H1 (cell line): ENCODE measurements at regions of chr3 and their contacts with region 1.

Region 1: GRCh38 chr3:196554205-196554604 is 14.1 kb downstream of the WDR53 start:
- DNase-seq: no peak
- H3K4me3 ChIP-seq: no peak overlapping the region
- H3K27ac ChIP-seq: no peak overlapping the region
- H3K4me1 ChIP-seq: no peaks in the 10 kb centered on the region
- H3K27me3 ChIP-seq: no peaks in the 10 kb centered on the region
- CTCF ChIP-seq: no peak
- EP300 ChIP-seq: no peak
- POLR2A ChIP-seq: no peak
- RAD21 ChIP-seq: no peak

Region 2: DNA sequence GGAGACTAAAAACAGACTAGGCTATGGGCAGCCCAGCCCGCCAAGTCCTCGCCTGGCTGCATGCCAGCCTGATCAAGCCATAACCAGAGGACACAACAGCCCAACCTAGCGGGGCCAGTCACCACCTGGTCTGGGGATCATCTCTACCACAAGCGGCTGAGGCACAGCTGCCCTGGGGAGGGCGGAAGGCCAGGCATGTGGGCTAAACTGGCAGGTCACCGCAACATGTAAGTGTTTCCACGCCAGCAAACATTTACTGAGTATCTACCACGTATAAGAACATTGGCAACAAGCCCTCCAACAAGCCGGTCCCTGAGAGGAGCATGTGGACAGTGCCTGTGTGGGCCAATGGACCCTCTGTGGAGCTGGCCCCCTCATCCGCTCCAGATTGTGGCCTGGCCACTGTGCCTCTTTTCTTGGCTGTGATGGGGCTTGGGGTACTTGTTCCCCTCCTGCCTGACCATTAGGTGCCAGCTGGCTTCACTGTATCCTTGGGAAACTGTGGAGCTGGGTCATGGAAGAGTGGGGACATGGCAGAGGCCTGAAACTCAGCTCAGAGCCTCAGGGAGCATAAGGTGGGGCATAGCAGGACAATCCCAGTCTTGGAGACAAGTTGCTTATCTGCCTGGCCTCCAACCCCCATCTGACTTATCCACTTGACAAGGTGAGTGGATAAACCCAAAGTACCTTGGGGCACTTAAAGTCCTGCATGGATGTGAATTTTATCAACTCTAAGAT is 131.0 kb before region 1 on chr3:
- CTCF ChIA-PET with region 1: no interaction called
- POLR2A ChIA-PET with region 1: no interaction called
- DNase-seq: no peak
- H3K4me3 ChIP-seq: no peak overlapping the region
- H3K27ac ChIP-seq: no peak overlapping the region
- H3K4me1 ChIP-seq: peaks cover 0 to 8% (median 0%) of the 10 kb centered on the region in 4 experiments; a peak in 3 of 7 replicates
- H3K27me3 ChIP-seq: no peaks in the 10 kb centered on the region
- CTCF ChIP-seq: no peak
- EP300 ChIP-seq: no peak
- POLR2A ChIP-seq: no peak
- RAD21 ChIP-seq: no peak

Region 3: GRCh38 chr3:196537319-196537984 is 16.8 kb before region 1 on chr3:
- CTCF ChIA-PET with region 1: interaction called, 19 read pairs
- POLR2A ChIA-PET with region 1: no interaction called
- DNase-seq: peak in 1 of 2 experiments; percentile 83
- H3K4me3 ChIP-seq: no peak overlapping the region
- H3K27ac ChIP-seq: no peak overlapping the region
- H3K4me1 ChIP-seq: peaks cover 0 to 3% (median 2%) of the 10 kb centered on the region in 4 experiments; a peak in 3 of 7 replicates
- H3K27me3 ChIP-seq: no peaks in the 10 kb centered on the region
- CTCF ChIP-seq: peak in 2 of 3 experiments; percentile 47 to 56; a peak in 3 of 4 replicates
- EP300 ChIP-seq: no peak
- POLR2A ChIP-seq: no peak
- RAD21 ChIP-seq: peak; percentile 57